ENCODE measurements at regions of chr2 and their contacts with region 1.

Region 1: GRCh38 chr2:54522624-54523281 is 66.6 kb downstream of the SPTBN1 start:
- DNase-seq: peak; percentile 72 to 81 (median 78)
- ATAC-seq: peak; percentile 97
- H3K4me3 ChIP-seq: no peak overlapping the region
- H3K27ac ChIP-seq: no peak overlapping the region
- H3K4me1 ChIP-seq: 0 out of 5 replicates have a peak, but pooled peaks cover 0 to 6% of the 10 kb centered on the region in 2 experiments
- H3K27me3 ChIP-seq: peaks cover 17 to 26% of the 10 kb centered on the region in 2 experiments; a peak in 3 of 5 replicates
- CTCF ChIP-seq: peak; percentile 67 to 82 (median 75)
- EP300 ChIP-seq: no peak
- POLR2A ChIP-seq: no peak
- RAD21 ChIP-seq: peak; percentile 88 to 93

Region 2: DNA sequence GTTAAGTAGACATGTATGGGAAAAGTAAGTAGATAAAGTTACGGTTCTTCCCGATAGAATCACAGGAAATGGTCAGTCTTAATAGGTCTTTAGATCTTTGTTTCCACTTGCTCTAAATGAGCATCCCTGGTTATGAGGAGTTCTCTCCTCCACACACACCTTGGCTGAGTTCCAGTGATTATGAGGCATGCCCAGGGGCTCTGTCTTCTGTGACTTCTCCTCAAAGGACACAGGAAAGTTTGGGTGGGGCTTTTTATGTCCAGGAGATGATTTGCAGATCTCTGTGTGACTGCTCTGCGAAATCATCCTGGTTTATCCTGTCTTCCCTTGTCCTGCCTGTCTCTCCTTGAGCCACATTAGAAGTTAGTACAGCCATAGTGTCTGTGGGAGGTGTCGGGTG is 116.9 kb after region 1 on chr2:
- CTCF ChIA-PET with region 1: no interaction called
- POLR2A ChIA-PET with region 1: no interaction called
- in situ Hi-C with region 1: loop called (anchors 10 kb)
- intact Hi-C with region 1: no loop called
- DNase-seq: peak in 3 of 4 experiments; percentile 11 to 27 (median 18)
- ATAC-seq: peak; percentile 60
- H3K4me3 ChIP-seq: no peak overlapping the region
- H3K27ac ChIP-seq: no peak overlapping the region
- H3K4me1 ChIP-seq: 0 out of 5 replicates have a peak, but pooled peaks cover 0 to 3% of the 10 kb centered on the region in 2 experiments
- H3K27me3 ChIP-seq: no peaks in the 10 kb centered on the region
- CTCF ChIP-seq: no peak
- EP300 ChIP-seq: no peak
- POLR2A ChIP-seq: no peak
- RAD21 ChIP-seq: no peak

Region 3: GRCh38 chr2:54704688-54705605 is 182.2 kb after region 1 on chr2:
- CTCF ChIA-PET with region 1: interaction called, 11 read pairs
- POLR2A ChIA-PET with region 1: no interaction called
- in situ Hi-C with region 1: loop called (anchors 5 kb)
- intact Hi-C with region 1: loop called (anchors 1 kb)
- DNase-seq: peak in 2 of 4 experiments; percentile 10 to 60
- ATAC-seq: peak; percentile 86
- H3K4me3 ChIP-seq: no peak overlapping the region
- H3K27ac ChIP-seq: no peak overlapping the region
- H3K4me1 ChIP-seq: peaks cover 3 to 13% of the 10 kb centered on the region in 2 experiments; a peak in 3 of 5 replicates
- H3K27me3 ChIP-seq: peaks cover 18% of the 10 kb centered on the region in 2 experiments; a peak in 4 of 5 replicates
- CTCF ChIP-seq: peak in 2 of 3 experiments; percentile 40 to 72; a peak in 4 of 6 replicates
- EP300 ChIP-seq: no peak
- POLR2A ChIP-seq: no peak
- RAD21 ChIP-seq: peak; percentile 76 to 82

Region 4: DNA sequence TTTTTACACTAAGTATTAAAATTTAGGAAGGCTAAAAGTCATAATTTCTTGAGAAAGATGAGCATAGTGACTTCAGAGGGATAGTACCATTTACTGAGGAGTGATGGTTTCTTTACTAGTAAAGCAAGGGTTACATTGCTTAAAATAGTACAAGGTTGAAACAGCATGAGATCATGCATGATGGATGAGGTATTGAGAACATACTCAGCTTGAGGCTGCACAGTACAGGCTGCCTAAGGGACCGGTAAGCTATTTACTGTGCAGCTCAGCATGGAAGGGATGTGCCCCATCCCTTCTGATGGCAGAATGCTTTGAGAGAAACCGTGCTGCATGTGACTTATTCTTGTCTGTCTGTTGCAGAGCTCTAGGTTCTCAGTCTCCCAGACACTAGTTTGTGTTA is 322.8 kb after region 1 on chr2:
- CTCF ChIA-PET with region 1: no interaction called
- POLR2A ChIA-PET with region 1: no interaction called
- in situ Hi-C with region 1: loop called (anchors 10 kb)
- intact Hi-C with region 1: no loop called
- DNase-seq: no peak
- ATAC-seq: no peak
- H3K4me3 ChIP-seq: no peak overlapping the region
- H3K27ac ChIP-seq: no peak overlapping the region
- H3K4me1 ChIP-seq: no peaks in the 10 kb centered on the region; a peak in 1 of 5 replicates
- H3K27me3 ChIP-seq: peaks cover 22 to 31% of the 10 kb centered on the region in 2 experiments
- CTCF ChIP-seq: no peak
- EP300 ChIP-seq: no peak
- POLR2A ChIP-seq: no peak
- RAD21 ChIP-seq: no peak